ENCODE measurements at regions of chr4 and their contacts with region 1.

Region 1: GRCh38 chr4:104930298-104930697 is 216.4 kb upstream of the TET2 start:
- DNase-seq: no peak
- H3K4me3 Mint-ChIP-seq: no peak overlapping the region
- H3K27ac Mint-ChIP-seq: no peak overlapping the region
- H3K4me1 Mint-ChIP-seq: peaks cover 44% of the 10 kb centered on the region
- H3K27me3 Mint-ChIP-seq: no peaks in the 10 kb centered on the region
- CTCF ChIP-seq: no peak

Region 2: DNA sequence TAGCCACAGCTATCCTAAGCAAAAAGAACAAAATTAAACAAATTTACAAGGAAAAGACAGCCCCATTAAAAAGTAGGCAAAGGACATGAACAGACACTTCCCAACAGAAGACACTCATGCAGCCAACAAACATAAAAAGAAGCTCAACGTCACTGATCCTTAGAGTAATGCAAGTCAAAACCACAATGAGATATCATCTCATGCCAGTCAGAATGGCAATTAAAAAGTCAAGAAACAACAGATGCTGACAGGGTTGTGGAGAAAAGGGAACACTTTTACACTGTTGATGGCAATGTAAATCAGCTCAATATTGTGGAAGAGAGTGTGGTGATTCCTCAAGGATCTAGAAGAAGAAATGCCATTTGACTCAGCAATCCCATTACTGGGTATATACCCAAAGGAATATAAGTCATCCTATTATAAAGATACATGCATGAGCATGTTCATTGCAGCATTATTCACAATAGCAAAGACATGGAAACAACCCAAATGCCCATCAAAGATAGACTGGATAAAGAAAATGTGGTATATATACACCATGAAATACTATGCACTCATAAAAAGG is 53.4 kb after region 1 on chr4:
- CTCF ChIA-PET with region 1: no interaction called
- intact Hi-C with region 1: no loop called
- DNase-seq: no peak
- H3K4me3 Mint-ChIP-seq: no peak overlapping the region
- H3K27ac Mint-ChIP-seq: no peak overlapping the region
- H3K4me1 Mint-ChIP-seq: no peaks in the 10 kb centered on the region
- H3K27me3 Mint-ChIP-seq: no peaks in the 10 kb centered on the region
- CTCF ChIP-seq: no peak

Region 3: GRCh38 chr4:105146276-105147015 is 216.1 kb after region 1 on chr4 and contains the start of gene TET2:
- CTCF ChIA-PET with region 1: no interaction called
- intact Hi-C with region 1: loop called (anchors 5 kb)
- DNase-seq: peak; percentile 69
- H3K4me3 Mint-ChIP-seq: peak within 1 kb of the TSS; percentile 99
- H3K27ac Mint-ChIP-seq: peak within 1 kb of the TSS; percentile 100
- H3K4me1 Mint-ChIP-seq: peaks cover 5% of the 10 kb centered on the region
- H3K27me3 Mint-ChIP-seq: no peaks in the 10 kb centered on the region
- CTCF ChIP-seq: no peak
- total RNA-seq, gene TET2: 19.2 and 20.4 TPM in 2 replicates

Measured in Calu3 (cell line).